Activated B cell treated with CpG ODN at 0.5 μM for 24 hours (primary cell): ENCODE measurements at regions of chr7 and their contacts with region 1.

Region 1: DNA sequence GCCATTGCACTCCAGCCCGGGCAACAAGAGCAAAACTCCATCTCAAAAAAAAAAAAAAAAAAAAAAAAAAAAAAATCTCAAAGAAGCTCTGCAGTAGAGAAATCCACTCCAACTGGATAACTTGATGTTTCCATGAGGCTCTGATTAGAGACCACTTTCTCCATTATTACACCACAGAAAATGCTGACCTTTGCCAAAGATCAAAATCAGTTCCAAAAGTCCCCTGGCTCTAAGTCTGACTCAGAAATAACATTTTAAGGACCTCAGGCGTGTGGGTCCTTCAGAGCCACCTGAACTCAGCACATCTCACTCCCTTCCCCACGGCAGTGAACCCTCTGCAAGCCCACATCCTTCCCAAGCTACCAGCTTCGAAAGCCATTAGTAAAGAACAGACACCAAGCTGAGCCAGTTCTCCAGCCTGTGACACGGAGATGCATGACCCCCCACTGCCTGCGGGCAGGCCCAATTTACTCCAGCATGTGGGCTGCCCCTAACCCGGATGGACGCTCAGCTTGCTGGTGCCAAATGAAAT is 13.8 kb upstream of the TMEM120A start:
- DNase-seq: no peak
- ATAC-seq: peak; percentile 41
- H3K4me3 Mint-ChIP-seq: peak overlapping the region; percentile 55
- H3K27ac Mint-ChIP-seq: peak overlapping the region; percentile 83
- H3K4me1 Mint-ChIP-seq: peaks cover 42% of the 10 kb centered on the region
- H3K27me3 Mint-ChIP-seq: no peaks in the 10 kb centered on the region
- CTCF ChIP-seq: no peak

Region 2: GRCh38 chr7:75537731-75538130 is 470.5 kb before region 1 on chr7:
- CTCF ChIA-PET with region 1: no interaction called
- POLR2A ChIA-PET with region 1: no interaction called
- intact Hi-C with region 1: no loop called
- DNase-seq: no peak
- ATAC-seq: no peak
- H3K4me3 Mint-ChIP-seq: no peak overlapping the region
- H3K27ac Mint-ChIP-seq: no peak overlapping the region
- H3K4me1 Mint-ChIP-seq: peaks cover 8% of the 10 kb centered on the region
- H3K27me3 Mint-ChIP-seq: no peaks in the 10 kb centered on the region
- CTCF ChIP-seq: no peak

Region 3: DNA sequence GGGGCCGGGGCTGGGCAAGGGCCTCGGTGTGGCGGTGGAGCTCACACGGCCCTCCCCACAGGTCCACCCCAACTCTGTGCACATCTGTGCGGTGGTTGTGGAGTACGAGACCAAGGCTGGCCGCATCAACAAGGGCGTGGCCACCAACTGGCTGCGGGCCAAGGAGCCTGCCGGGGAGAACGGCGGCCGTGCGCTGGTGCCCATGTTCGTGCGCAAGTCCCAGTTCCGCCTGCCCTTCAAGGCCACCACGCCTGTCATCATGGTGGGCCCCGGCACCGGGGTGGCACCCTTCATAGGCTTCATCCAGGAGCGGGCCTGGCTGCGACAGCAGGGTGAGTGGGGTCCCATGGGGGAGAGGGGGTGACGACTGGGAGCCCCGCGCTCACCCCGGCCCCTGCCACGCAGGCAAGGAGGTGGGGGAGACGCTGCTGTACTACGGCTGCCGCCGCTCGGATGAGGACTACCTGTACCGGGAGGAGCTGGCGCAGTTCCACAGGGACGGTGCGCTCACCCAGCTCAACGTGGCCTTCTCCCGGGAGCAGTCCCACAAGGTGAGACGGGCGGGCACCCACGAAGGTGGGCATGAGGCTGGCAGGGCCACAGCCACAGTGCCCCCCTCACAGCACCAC is 22.6 kb before region 1 on chr7:
- CTCF ChIA-PET with region 1: no interaction called
- POLR2A ChIA-PET with region 1: interaction called, 14 read pairs
- intact Hi-C with region 1: no loop called
- DNase-seq: no peak
- ATAC-seq: no peak
- H3K4me3 Mint-ChIP-seq: no peak overlapping the region
- H3K27ac Mint-ChIP-seq: no peak overlapping the region
- H3K4me1 Mint-ChIP-seq: peaks cover 23% of the 10 kb centered on the region
- H3K27me3 Mint-ChIP-seq: no peaks in the 10 kb centered on the region
- CTCF ChIP-seq: no peak

Region 4: GRCh38 chr7:76191783-76192275 is 183.6 kb after region 1 on chr7:
- CTCF ChIA-PET with region 1: no interaction called
- POLR2A ChIA-PET with region 1: no interaction called
- intact Hi-C with region 1: no loop called
- DNase-seq: no peak
- ATAC-seq: no peak
- H3K4me3 Mint-ChIP-seq: no peak overlapping the region
- H3K27ac Mint-ChIP-seq: no peak overlapping the region
- H3K4me1 Mint-ChIP-seq: no peaks in the 10 kb centered on the region
- H3K27me3 Mint-ChIP-seq: peaks cover 14% of the 10 kb centered on the region
- CTCF ChIP-seq: no peak